ENCODE measurements at regions of chr6 and their contacts with region 1.

Region 1: DNA sequence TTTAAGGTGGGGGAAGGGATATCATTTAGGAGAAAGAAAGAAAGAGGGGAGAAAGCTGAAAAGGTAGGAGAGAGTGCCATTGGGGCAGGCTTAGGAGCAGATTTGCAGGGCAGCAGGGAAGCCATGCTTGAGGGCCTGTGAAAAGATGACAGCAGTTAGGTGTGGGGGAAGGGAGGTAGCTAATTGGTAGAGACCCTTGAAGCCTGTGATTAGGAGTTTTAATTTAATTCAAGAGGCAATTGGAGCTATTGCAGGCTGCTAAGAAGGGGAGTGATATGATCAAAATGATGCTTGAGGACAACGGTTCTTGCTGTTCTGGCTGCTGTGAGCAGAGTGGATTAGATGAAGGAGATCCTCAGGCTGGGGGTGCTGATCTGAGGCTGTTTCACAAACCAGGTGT is 24.5 kb upstream of the SEC63 start:
- DNase-seq: no peak
- H3K4me3 ChIP-seq: no peak overlapping the region
- H3K27ac ChIP-seq: no peak overlapping the region
- H3K4me1 ChIP-seq: peaks cover 0 to 10% of the 10 kb centered on the region in 2 experiments; a peak in 1 of 4 replicates
- H3K27me3 ChIP-seq: no peaks in the 10 kb centered on the region
- CTCF ChIP-seq: no peak
- EP300 ChIP-seq: no peak
- RAD21 ChIP-seq: no peak

Region 2: GRCh38 chr6:108020472-108021116 is 38.1 kb after region 1 on chr6:
- CTCF ChIA-PET with region 1: interaction called, 14 read pairs
- POLR2A ChIA-PET with region 1: no interaction called
- DNase-seq: no peak
- H3K4me3 ChIP-seq: no peak overlapping the region
- H3K27ac ChIP-seq: no peak overlapping the region
- H3K4me1 ChIP-seq: no peaks in the 10 kb centered on the region
- H3K27me3 ChIP-seq: no peaks in the 10 kb centered on the region
- CTCF ChIP-seq: no peak
- EP300 ChIP-seq: no peak
- RAD21 ChIP-seq: no peak

Region 3: GRCh38 chr6:108039681-108040080 is 57.2 kb after region 1 on chr6:
- CTCF ChIA-PET with region 1: interaction called, 22 read pairs
- POLR2A ChIA-PET with region 1: no interaction called
- DNase-seq: no peak
- H3K4me3 ChIP-seq: no peak overlapping the region
- H3K27ac ChIP-seq: no peak overlapping the region
- H3K4me1 ChIP-seq: no peaks in the 10 kb centered on the region
- H3K27me3 ChIP-seq: no peaks in the 10 kb centered on the region
- CTCF ChIP-seq: no peak
- EP300 ChIP-seq: no peak
- RAD21 ChIP-seq: no peak

Region 4: GRCh38 chr6:108526739-108527174 is 544.3 kb after region 1 on chr6:
- CTCF ChIA-PET with region 1: interaction called, 15 read pairs
- POLR2A ChIA-PET with region 1: no interaction called
- DNase-seq: peak; percentile 64
- H3K4me3 ChIP-seq: no peak overlapping the region; a peak in 1 of 4 replicates
- H3K27ac ChIP-seq: no peak overlapping the region
- H3K4me1 ChIP-seq: no peaks in the 10 kb centered on the region; a peak in 1 of 4 replicates
- H3K27me3 ChIP-seq: no peaks in the 10 kb centered on the region
- CTCF ChIP-seq: peak; percentile 84
- EP300 ChIP-seq: no peak
- RAD21 ChIP-seq: peak; percentile 95